ENCODE measurements at regions of chr19 and their contacts with region 1.

Region 1: DNA sequence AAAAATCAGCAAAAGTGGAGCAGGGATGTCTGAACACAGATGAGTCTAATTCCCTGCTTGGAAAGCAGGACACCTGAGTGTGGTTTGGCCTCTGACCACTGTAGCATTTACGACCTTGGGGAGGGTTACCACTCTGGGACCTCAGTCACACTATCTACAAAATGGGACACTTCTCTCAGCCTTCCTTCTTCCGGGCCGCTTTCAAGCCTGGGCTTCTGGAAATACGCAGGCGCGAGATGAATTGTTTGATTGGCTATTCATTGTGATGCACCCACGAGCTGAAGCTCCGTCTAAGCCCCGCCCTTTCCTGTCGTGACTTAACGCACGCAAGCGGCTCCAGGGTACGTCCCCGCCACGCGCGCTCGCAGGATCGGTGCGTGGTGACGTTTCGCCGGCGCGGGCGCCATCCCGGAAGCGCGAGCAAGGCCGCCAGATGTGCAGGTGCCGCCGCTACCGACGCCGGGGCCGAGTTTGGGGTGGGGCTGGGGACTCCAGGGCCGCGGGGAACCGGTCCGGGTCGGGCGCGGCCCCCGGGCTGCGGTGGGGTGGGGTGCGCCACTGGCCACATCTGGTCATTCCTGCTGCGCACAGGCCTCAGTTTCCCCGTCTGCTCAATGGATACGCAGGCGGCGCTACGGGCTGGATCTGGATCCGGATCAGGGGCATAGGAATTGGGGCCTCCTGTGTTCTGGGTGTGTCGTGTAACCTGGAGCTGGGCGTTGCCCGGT is at the start of gene KXD1:
- DNase-seq: peak; percentile 98
- H3K4me3 Mint-ChIP-seq: peak within 1 kb of the TSS; percentile 93
- H3K27ac Mint-ChIP-seq: peak within 1 kb of the TSS; percentile 92
- H3K4me1 Mint-ChIP-seq: peaks cover 20% of the 10 kb centered on the region
- H3K27me3 Mint-ChIP-seq: no peaks in the 10 kb centered on the region
- total RNA-seq, gene KXD1: 128 and 133 TPM in 2 replicates

Region 2: GRCh38 chr19:18469069-18469846 is 88.4 kb before region 1 on chr19:
- intact Hi-C with region 1: loop called (anchors 1 kb)
- DNase-seq: peak; percentile 43
- H3K4me3 Mint-ChIP-seq: no peak overlapping the region
- H3K27ac Mint-ChIP-seq: no peak overlapping the region
- H3K4me1 Mint-ChIP-seq: peaks cover 15% of the 10 kb centered on the region
- H3K27me3 Mint-ChIP-seq: no peaks in the 10 kb centered on the region

Region 3: DNA sequence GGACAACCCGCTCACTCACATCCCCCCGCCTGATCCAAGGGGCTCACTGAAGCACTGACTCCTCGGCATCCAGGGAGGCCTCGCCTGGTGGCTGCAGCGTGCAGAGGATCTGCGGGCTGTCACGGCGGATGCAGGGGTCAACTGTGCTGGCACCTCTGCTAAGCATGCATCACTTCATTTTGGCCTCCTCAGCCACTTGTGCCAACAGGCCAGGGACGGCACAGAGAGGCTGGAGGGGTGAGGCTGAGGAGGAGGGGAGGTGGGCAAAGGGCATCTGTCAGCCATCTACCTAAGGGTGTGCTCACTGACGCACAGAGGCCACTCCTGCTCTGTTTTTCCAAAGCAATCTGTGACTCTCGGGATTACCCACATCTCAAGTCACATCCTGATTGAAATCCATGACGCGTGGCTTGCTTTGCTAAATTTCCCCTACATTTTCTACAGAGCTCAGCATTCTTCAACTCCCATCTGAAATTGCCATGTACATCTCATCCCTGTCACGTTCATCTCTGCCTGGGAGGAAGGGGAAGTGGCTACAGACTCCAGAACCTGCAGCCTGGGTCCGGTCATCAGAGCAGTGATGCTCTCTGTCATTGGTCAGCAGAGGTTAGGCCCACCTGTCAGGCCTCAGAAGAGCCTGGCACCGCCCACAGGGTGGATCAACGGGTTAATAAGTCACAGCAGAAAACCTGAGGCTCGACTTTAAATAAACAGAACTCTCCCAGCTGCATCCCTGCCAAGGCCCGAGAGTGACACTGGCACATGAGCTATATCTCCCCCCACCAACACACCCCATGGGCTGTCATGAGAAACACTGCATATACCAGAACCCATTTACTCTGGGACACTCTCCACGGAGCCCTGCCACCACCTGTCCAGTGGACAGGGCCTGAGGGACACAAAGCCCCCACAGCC is 53.4 kb before region 1 on chr19:
- intact Hi-C with region 1: no loop called
- DNase-seq: no peak
- H3K4me3 Mint-ChIP-seq: no peak overlapping the region
- H3K27ac Mint-ChIP-seq: no peak overlapping the region
- H3K4me1 Mint-ChIP-seq: peaks cover 66% of the 10 kb centered on the region
- H3K27me3 Mint-ChIP-seq: no peaks in the 10 kb centered on the region

Region 4: DNA sequence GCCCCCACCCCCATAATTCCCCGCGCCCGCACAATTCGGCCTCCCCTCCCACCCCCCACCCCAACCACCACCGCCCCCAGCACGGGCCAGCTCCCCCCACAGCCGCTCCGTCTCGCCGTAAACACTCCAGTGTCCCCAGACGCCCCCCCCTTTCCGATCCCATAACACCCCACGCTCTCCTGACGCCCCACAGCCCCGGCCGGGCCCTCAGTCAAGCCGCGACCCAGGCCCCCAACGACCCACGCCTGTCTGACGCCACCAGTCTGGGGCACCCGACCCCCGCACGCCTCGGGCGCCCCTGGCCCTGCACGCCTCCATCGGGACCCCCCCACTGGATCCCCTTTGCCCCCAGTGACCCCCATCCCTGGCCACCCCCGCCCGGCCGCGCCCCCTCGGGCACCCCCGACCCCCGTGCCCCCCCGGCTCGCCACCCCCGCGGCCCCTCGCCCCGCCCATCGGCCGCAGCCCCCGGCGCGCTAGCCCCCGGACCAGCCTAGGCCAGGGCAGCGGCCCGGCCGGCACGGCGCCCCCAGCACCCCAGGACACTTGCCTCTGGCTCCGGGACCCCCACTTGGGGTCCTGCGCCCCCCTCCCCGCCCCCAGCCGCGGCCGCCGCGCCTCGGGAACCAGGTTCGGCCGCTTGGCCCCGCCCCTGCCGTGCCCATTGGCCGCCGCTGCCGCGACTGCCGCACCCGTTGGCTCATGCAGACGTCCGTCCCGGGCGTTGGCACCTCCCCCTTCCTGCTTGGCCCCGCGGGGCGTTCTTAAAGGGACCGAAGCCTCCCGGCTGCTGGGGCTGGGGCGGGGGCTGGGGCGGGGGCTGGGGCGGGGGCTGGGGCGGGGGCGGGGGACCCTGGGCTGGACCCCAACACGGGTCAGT is 14.5 kb before region 1 on chr19 and contains the start of gene FKBP8:
- intact Hi-C with region 1: loop called (anchors 1 kb)
- DNase-seq: peak; percentile 92
- H3K4me3 Mint-ChIP-seq: peak within 1 kb of the TSS; percentile 92
- H3K27ac Mint-ChIP-seq: peak within 1 kb of the TSS; percentile 99
- H3K4me1 Mint-ChIP-seq: peaks cover 27% of the 10 kb centered on the region
- H3K27me3 Mint-ChIP-seq: peaks cover 4% of the 10 kb centered on the region
- total RNA-seq, gene FKBP8: 163 and 167 TPM in 2 replicates

Region 5: GRCh38 chr19:18571564-18572300 is 14.1 kb after region 1 on chr19 and contains the start of gene UBA52:
- intact Hi-C with region 1: loop called (anchors 1 kb)
- DNase-seq: peak; percentile 99
- H3K4me3 Mint-ChIP-seq: peak within 1 kb of the TSS; percentile 91
- H3K27ac Mint-ChIP-seq: peak within 1 kb of the TSS; percentile 98
- H3K4me1 Mint-ChIP-seq: peaks cover 27% of the 10 kb centered on the region
- H3K27me3 Mint-ChIP-seq: no peaks in the 10 kb centered on the region
- total RNA-seq, gene UBA52: 1,472 and 1,500 TPM in 2 replicates

Region 6: GRCh38 chr19:18831524-18832305 is 274.1 kb after region 1 on chr19 and contains the start of gene UPF1:
- intact Hi-C with region 1: loop called (anchors 5 kb)
- DNase-seq: peak; percentile 96
- H3K4me3 Mint-ChIP-seq: peak within 1 kb of the TSS; percentile 96
- H3K27ac Mint-ChIP-seq: peak within 1 kb of the TSS; percentile 95
- H3K4me1 Mint-ChIP-seq: peaks cover 35% of the 10 kb centered on the region
- H3K27me3 Mint-ChIP-seq: peaks cover 14% of the 10 kb centered on the region
- total RNA-seq, gene UPF1: 102 and 113 TPM in 2 replicates

Region 7: GRCh38 chr19:19385108-19385899 is 827.7 kb after region 1 on chr19:
- intact Hi-C with region 1: no loop called
- DNase-seq: peak; percentile 100
- H3K4me3 Mint-ChIP-seq: peak overlapping the region; percentile 87
- H3K27ac Mint-ChIP-seq: peak overlapping the region; percentile 92
- H3K4me1 Mint-ChIP-seq: peaks cover 45% of the 10 kb centered on the region
- H3K27me3 Mint-ChIP-seq: peaks cover 2% of the 10 kb centered on the region

Measured in activated T-helper 1 cell treated with anti-CD3 and anti-CD28 coated beads, Interleukin-12 subunit alpha, Interleukin-12 subunit beta, Interleukin-2, Interleukin-4 antibody, amounts not matched to agents 30 ng/mL and 10 ng/mL and 1 ng/mL, durations not matched to agents 14 hours and 24 hours and 36 hours (primary cell).